BJ (cell line): ENCODE measurements at regions of chr12 and their contacts with region 1.

Region 1: DNA sequence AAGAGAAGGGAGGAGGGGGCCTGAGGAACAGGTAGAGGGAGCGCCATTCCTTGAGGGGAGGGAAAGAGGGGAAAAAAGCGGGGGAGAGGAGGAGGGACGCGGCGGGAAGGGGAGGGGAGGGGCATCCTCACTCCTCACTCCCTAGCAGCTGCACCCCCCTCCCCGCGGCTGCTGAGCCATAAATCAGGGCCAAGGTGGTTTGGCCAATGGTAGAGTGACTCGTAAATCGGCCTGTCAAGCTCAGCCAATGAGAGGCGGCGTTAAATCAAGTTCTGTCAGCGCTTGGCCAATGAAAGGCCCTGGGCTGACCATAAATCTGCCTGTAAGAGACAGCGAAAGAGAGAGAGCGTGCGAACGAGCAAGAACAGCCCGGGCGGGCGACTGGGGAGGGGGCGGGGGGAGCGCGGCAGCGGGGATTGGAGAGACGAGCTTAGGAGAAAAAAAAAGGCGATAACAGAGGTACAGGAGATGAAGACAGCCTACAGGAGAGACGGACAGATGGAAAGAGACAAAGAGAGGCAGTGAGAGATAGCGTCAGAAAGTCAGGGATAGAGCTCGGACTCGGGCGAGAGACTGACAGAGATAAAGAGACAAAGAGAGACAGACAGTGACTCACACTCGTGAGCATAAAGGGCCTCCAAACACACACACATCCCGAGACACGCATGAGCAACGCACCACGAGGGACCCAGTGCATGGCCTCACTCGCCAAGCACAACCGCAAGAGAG is 5.1 kb downstream of the GPR84 start:
- DNase-seq: peak; percentile 93
- H3K4me3 ChIP-seq: peak overlapping the region; percentile 55
- H3K27me3 ChIP-seq: no peaks in the 10 kb centered on the region
- CTCF ChIP-seq: no peak

Region 2: GRCh38 chr12:54220092-54220557 is 139.1 kb before region 1 on chr12:
- CTCF ChIA-PET with region 1: interaction called, 19 read pairs
- POLR2A ChIA-PET with region 1: no interaction called
- DNase-seq: peak; percentile 32
- H3K4me3 ChIP-seq: no peak overlapping the region
- H3K27me3 ChIP-seq: no peaks in the 10 kb centered on the region; the same call in 1 of the 2 replicates
- CTCF ChIP-seq: peak; percentile 88

Region 3: DNA sequence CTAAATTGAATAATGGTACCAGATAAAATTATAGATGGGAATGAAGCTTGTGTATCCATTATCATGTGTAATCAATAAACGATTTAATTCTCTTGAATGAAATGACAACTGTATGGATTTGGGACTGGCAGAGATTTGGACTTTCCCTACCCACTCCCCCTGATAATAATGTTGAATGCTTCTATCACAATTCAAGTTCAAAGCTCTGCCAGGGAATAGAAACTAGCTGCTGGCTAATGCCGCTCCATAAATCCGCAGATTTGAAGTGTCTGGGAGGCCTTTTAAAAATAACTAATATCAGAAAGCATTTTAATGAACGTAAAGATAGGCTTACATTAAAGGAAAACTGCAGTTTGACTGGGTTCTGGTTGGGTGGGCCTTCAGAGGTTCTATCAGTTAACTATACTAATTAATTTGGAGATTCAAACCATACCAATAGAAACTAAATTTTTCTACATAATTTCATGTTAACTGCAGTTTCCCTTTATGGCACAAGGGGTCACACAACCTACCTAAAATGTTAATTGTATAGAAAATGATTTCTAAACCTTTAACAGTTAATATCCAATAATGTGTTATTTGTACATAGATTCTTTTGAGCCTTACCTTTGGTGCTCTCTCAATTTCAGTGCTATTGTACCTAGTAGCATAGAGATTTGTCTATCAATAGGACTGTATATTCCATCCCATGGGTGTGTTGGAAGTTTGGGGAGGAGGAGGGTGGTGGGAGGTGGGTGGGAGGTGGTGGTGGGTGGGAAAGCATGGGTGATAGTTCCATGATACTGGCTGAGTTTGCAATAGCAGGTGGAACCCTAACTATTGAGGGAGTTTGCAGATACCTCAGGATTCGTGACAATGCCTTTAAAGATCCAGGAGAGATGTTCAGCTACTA is 73.8 kb before region 1 on chr12:
- CTCF ChIA-PET with region 1: interaction called, 86 read pairs
- POLR2A ChIA-PET with region 1: no interaction called
- DNase-seq: no peak
- H3K4me3 ChIP-seq: no peak overlapping the region
- H3K27me3 ChIP-seq: no peaks in the 10 kb centered on the region
- CTCF ChIP-seq: peak; percentile 41; the same call in 1 of the 2 replicates

Region 4: DNA sequence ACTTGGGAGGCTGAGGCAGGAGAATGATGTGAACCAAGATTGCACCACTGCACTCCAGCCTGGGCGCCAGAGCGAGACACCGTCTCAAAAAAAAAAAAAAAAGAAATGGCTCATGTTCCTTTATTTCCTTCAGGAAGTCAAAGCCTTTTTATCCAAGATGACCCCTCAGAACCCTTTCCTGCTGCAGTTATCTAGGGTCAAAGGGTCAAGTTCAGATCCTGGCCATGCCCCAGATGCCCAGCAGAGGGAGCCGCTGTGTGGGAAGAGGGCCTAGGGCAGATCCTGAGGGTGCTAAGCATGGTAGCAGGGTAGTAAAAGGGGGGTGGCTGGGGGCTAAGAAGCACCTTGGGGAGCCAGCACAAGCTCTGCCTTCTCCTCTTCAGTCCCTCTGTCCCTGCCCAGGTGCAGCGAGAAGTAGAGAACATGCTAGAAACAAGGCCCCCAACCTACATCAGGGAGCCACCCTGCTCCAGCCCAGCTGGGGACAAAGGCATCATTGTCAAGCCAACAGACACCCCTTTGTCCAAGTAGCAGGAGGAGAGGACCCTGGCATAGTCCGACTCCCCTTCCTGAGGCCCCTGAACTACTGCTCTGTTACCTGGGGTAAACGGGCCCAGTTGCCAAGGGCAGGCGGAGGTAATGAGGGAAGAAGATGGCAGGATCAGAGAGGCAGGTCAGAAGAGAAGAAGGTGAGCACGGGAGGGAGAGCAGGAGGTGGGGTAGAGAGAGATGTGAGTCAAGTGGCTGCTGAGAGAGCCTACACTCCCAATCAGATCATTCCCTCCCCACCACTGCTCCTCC is 64.8 kb before region 1 on chr12:
- CTCF ChIA-PET with region 1: interaction called, 86 read pairs
- POLR2A ChIA-PET with region 1: no interaction called
- DNase-seq: no peak
- H3K4me3 ChIP-seq: no peak overlapping the region
- H3K27me3 ChIP-seq: peaks cover 3% of the 10 kb centered on the region; the same call in 1 of the 2 replicates
- CTCF ChIP-seq: peak; percentile 89

Region 5: GRCh38 chr12:54337280-54337842 is 21.8 kb before region 1 on chr12:
- CTCF ChIA-PET with region 1: interaction called, 114 read pairs
- POLR2A ChIA-PET with region 1: no interaction called
- DNase-seq: no peak
- H3K4me3 ChIP-seq: no peak overlapping the region
- H3K27me3 ChIP-seq: no peaks in the 10 kb centered on the region
- CTCF ChIP-seq: peak; percentile 31; the same call in 1 of the 2 replicates